Ovary (tissue), 10 donors: ENCODE measurements at regions of chr5 and their contacts with region 1.

Region 1: GRCh38 chr5:58410441-58410840 is 49.4 kb downstream of the PLK2 start:
- DNase-seq: no peak
- H3K4me3 ChIP-seq: no peak overlapping the region
- H3K27ac ChIP-seq: no peak overlapping the region
- H3K4me1 ChIP-seq: no peaks in the 10 kb centered on the region
- H3K27me3 ChIP-seq: no peaks in the 10 kb centered on the region
- CTCF ChIP-seq: no peak
- EP300 ChIP-seq: no peak
- POLR2A ChIP-seq: no peak

Region 2: GRCh38 chr5:58424181-58424580 is 13.7 kb after region 1 on chr5:
- intact Hi-C with region 1: loop called in 1 of 4 experiments (anchors 1 kb)
- DNase-seq: no peak
- H3K4me3 ChIP-seq: no peak overlapping the region
- H3K27ac ChIP-seq: no peak overlapping the region
- H3K4me1 ChIP-seq: no peaks in the 10 kb centered on the region
- H3K27me3 ChIP-seq: no peaks in the 10 kb centered on the region
- CTCF ChIP-seq: no peak
- EP300 ChIP-seq: no peak
- POLR2A ChIP-seq: no peak